Activated T-helper 2 cell treated with anti-CD3 and anti-CD28 coated beads, Interferon-gamma antibody, Interleukin-2, Interleukin-4, amounts not matched to agents 10 μg/mL and 5 μg/mL and 100 μg/mL, durations not matched to agents 14 hours and 24 hours and 36 hours (primary cell): ENCODE measurements at regions of chr15 and their contacts with region 1.

Region 1: DNA sequence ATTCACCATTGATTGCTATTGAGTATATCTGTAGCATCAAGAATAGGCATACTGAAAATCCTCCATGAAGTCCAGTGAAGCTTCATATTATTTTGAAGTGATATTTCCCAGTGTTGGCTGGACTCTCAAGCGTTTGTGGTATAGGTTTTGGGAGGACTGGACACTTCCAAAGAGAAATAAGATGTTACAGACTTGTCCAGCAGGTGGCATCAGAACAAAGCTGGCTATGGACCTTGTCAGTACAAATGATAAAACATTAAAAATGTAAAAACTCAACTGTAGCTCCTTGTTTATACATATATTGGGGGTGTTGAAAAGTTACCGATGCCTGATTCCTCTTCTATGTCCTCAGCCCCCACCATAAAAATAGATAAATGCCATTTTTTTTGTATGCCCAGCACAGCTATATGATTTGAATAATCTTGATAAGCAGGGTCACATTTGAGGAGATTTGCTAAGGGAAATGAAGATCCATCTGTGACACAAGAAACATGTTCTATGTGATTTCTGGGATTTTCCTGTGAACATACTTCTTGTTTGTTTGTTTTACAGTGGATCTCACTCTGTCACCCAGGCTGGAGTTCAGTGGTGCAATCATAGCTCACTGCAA is 54.5 kb upstream of the GOLGA6B start:
- DNase-seq: no peak
- H3K4me3 Mint-ChIP-seq: no peak overlapping the region
- H3K27ac Mint-ChIP-seq: no peak overlapping the region
- H3K4me1 Mint-ChIP-seq: no peaks in the 10 kb centered on the region
- H3K27me3 Mint-ChIP-seq: peaks cover 11% of the 10 kb centered on the region

Region 2: GRCh38 chr15:72671535-72671934 is 71.6 kb after region 1 on chr15:
- intact Hi-C with region 1: loop called (anchors 10 kb)
- DNase-seq: no peak
- H3K4me3 Mint-ChIP-seq: no peak overlapping the region
- H3K27ac Mint-ChIP-seq: no peak overlapping the region
- H3K4me1 Mint-ChIP-seq: peaks cover 10% of the 10 kb centered on the region
- H3K27me3 Mint-ChIP-seq: peaks cover 13% of the 10 kb centered on the region

Region 3: DNA sequence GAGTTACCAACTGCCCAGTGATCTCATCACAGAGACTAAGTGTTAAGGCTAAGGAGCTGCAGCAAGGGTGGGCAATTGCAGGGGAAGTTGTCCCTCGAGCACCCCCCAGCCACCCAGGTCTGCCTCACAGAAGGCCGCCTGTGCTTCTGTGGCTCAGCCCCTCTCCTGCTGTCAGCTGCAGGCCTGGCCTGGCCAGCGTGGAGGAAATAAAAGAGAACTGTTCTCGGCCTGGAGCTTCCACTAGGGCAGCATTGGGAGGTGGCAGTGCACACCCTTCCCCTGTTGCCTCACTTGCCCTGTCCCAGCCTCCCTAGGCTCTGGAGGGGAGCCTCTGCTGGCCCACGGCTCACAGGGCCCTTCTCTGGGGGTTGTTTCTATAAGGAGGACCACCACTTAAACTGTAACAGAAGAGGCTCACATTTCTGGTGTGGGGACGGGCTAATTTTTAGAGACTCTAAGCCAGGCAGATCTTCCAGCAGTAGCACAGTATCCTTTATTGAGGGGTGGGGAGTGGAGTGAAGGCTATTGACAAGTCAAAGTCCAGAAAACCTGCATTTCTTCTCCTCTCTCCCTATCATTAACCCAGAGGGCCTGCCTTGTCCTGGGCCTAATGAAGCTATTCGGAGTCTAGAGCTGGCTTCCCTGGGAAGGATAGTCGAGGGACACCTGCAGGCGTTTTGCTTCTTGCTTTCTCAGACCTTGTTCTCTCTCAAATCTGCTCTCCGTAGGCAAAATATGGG is 259.2 kb after region 1 on chr15:
- intact Hi-C with region 1: no loop called
- DNase-seq: no peak
- H3K4me3 Mint-ChIP-seq: no peak overlapping the region
- H3K27ac Mint-ChIP-seq: no peak overlapping the region
- H3K4me1 Mint-ChIP-seq: no peaks in the 10 kb centered on the region
- H3K27me3 Mint-ChIP-seq: peaks cover 4% of the 10 kb centered on the region